Lower leg skin (tissue), 4 donors: ENCODE measurements at regions of chr9 and their contacts with region 1.

Region 1: DNA sequence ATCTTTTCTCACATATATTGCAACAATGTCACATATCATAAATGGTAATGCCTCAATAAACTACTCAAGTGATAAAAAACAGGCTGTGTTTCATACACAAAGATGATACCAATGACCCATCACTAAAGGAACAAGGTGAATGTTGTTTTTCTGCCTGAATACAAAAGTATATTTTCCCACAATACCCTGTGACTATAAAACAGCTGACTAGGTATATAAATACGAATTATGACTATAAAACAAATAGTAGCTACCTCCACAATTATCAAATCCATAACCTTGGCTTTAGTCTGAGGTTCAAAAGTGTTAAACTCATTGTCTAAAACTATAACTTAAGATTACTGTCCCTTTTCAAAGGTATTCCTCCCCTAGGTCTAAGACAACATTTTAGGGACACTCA is 58.7 kb downstream of the MPDZ start:
- DNase-seq: no peak
- H3K4me3 ChIP-seq: no peak overlapping the region
- CTCF ChIP-seq: no peak
- POLR2A ChIP-seq: no peak

Region 2: DNA sequence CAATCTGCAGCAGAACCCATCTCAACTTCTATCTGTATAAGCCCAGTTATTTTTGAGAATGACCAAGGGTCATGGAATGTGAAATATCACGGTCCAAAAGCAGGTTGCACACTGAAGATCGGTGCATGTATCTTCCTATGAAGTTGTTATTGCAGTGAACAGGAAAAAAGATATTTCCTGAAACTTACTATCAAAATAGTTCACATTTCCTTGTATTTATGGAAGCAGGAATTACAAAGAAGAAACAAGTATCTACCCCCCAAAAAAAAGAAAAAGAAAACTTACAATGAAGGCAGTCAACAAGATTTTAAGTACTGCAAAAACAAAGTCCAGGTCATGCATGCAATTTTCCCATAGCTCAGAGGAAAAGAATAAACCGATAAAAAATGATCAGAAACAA is 11.3 kb before region 1 on chr9:
- intact Hi-C with region 1: loop called (anchors 1 kb)
- DNase-seq: no peak
- H3K4me3 ChIP-seq: no peak overlapping the region
- CTCF ChIP-seq: no peak
- POLR2A ChIP-seq: no peak